ENCODE measurements at regions of chr11 and their contacts with region 1.

Region 1: GRCh38 chr11:11036848-11037732 is 179.2 kb upstream of the ZBED5 start:
- DNase-seq: no peak
- ATAC-seq: no peak
- H3K4me3 Mint-ChIP-seq: no peak overlapping the region
- H3K27ac Mint-ChIP-seq: no peak overlapping the region
- H3K4me1 Mint-ChIP-seq: no peaks in the 10 kb centered on the region
- H3K27me3 Mint-ChIP-seq: peaks cover 16% of the 10 kb centered on the region
- CTCF ChIP-seq: no peak

Region 2: DNA sequence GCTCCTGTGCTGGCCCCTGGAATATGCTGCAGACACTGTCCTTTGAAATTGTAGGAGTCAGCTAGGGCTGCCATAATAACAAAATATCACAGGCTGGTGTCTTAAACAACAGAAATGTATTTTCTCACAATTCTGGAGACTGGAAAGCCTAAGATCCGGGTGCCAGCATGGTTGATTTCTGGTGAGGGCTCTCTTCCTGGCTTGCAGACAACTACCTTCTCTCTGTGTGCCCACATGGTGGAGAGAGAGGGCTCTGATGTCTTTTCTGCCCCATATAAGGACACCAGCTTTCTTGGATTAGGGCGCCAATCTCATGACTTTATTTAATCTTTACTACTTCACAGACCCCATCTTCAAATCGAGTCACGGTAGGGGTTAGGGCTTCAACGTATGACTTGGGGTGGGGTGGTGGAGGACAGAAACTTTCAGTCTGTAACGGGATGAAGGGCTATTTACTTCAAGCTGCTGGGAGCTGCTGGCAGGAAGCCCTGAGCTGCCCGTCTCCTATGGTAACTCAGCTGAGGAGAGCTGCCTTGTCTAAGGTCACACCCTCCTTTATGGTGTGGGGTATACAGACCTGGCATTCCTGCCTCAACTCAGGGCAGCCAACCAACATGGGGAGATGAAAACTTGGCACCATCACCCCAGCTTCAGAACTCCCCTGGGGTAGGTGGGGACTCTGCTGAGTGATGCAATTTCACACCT is 36.4 kb before region 1 on chr11:
- CTCF ChIA-PET with region 1: no interaction called
- POLR2A ChIA-PET with region 1: no interaction called
- intact Hi-C with region 1: no loop called
- DNase-seq: no peak
- ATAC-seq: no peak
- H3K4me3 Mint-ChIP-seq: no peak overlapping the region
- H3K27ac Mint-ChIP-seq: no peak overlapping the region
- H3K4me1 Mint-ChIP-seq: peaks cover 16% of the 10 kb centered on the region
- H3K27me3 Mint-ChIP-seq: peaks cover 25% of the 10 kb centered on the region
- CTCF ChIP-seq: no peak

Region 3: GRCh38 chr11:11265994-11266606 is 229.0 kb after region 1 on chr11:
- CTCF ChIA-PET with region 1: interaction called, 3 read pairs
- POLR2A ChIA-PET with region 1: no interaction called
- intact Hi-C with region 1: loop called (anchors 1 kb)
- DNase-seq: no peak
- ATAC-seq: no peak
- H3K4me3 Mint-ChIP-seq: no peak overlapping the region
- H3K27ac Mint-ChIP-seq: no peak overlapping the region
- H3K4me1 Mint-ChIP-seq: peaks cover 26% of the 10 kb centered on the region
- H3K27me3 Mint-ChIP-seq: no peaks in the 10 kb centered on the region
- CTCF ChIP-seq: no peak

Region 4: DNA sequence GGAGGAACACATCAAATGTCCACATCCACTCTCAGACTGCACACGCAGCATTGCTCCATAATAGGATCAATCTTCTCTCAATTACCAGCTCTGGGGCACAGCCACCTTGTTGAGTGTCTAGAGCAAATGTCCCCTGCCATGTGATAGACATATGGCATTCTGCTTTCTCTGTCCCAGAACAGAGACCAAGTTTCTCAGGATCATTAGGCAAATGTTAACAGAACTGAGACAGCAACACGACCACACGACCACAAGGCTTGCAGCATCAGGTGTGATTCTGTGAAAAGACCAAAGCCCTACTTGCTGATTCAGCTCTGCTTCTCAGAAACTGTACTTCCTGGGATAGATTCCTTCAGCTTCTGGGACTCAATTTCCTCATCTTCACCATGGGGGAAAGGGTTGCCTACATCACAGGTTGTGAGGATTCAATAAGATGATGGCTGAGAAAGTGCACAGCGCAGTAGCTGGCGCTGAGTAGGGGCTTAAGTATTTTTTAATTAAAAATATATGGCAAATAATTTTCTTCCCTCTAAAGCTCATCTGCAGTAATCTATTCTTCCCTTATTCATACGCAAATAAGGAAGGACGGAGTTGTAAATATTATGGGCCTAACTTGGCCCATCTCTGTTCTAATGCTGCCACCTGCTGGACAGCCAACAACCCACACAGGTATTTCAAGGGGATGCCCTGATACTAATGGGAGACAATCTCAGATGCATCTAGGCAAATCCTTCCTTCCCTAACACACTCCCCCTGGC is 750.4 kb after region 1 on chr11:
- CTCF ChIA-PET with region 1: interaction called, 33 read pairs
- POLR2A ChIA-PET with region 1: no interaction called
- intact Hi-C with region 1: loop called (anchors 1 kb)
- DNase-seq: peak; percentile 33
- ATAC-seq: peak; percentile 85
- H3K4me3 Mint-ChIP-seq: no peak overlapping the region
- H3K27ac Mint-ChIP-seq: no peak overlapping the region
- H3K4me1 Mint-ChIP-seq: no peaks in the 10 kb centered on the region
- H3K27me3 Mint-ChIP-seq: peaks cover 9% of the 10 kb centered on the region
- CTCF ChIP-seq: peak; percentile 81

Region 5: DNA sequence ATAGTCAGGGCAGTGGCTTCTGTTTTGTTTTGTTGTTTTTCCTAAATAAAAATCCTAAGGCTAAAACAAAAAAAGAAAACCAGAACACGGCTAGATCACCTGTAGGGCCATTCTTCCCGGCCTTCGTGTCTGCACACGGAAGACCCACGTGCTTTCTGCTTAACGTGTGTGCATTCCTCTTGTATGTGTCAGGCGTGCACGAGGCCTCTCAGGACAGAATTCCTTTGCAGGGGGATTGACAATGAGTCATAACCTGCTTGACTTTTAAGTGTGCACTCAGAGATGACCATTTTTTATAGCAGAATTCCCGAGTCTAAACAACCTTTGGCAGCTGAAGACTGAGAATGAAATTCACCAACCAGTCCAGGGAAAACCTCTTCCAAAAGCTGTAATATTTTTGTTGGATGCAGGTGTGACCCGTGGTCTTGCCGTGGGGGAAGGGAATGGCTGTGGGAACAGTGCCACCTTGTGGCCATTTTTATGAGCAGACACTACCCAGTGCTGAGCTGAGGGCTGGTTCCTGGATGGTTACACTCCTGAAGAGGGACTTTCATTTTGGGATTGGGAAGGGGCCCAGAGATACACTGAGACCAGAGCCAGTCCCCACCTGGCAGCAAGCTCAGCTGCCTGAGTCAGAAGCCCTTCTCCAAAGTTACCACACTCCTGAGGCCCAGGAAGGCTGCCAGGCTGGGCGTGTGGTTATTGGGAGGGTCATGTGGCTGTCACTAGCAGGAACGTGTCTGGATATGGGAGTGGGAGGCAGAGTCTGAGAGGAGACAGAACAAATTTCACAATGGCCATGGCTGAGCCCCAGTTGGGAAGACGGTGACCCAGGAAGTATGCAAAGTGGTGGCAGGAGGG is 1007.1 kb after region 1 on chr11:
- CTCF ChIA-PET with region 1: no interaction called
- POLR2A ChIA-PET with region 1: no interaction called
- intact Hi-C with region 1: loop called (anchors 5 kb)
- DNase-seq: peak; percentile 34
- ATAC-seq: peak; percentile 66
- H3K4me3 Mint-ChIP-seq: no peak overlapping the region
- H3K27ac Mint-ChIP-seq: no peak overlapping the region
- H3K4me1 Mint-ChIP-seq: no peaks in the 10 kb centered on the region
- H3K27me3 Mint-ChIP-seq: peaks cover 6% of the 10 kb centered on the region
- CTCF ChIP-seq: peak; percentile 65

Region 6: DNA sequence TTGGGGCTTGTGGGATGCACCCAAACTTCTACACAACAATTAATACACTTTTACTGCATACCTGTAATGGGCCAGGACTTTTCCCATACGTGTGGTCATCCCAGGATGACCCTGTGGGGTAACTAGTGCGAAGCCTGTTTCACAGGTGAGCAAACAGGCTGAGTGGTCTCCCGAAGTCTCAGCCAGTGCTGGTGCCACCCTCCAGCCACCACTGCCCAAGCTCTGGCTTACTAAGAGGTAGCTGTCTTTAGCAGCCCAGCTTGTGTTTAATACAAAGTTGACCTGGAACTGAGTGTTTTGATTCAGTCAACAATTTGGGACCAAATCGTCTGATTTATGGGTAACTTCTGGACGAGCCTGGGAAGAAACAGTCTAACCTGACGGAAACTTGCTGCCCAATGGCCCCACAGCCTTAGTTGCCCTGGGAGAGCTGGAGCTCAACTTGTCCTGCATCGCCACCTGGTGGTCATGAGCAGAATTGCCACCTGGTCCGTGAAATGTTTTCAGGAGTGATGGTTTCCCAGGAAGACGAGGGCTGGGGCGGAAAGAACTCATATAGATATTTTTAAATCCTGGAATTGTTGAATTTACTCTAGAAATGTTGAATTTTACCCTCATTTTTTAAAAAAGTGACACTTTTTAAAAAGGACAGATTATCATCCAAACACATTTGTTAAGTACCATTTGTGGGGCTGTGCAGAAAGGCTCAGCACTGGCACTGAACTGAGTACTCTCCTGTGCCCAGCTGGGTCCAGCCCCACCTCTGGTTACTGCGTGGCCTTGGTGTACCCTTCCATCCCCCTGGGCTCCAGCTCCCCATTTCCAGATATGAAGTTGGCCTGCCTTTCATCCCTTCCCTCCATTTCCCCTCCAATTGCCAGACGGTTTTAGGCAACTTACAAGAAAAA is 1244.7 kb after region 1 on chr11:
- CTCF ChIA-PET with region 1: no interaction called
- POLR2A ChIA-PET with region 1: no interaction called
- intact Hi-C with region 1: loop called (anchors 10 kb)
- DNase-seq: peak; percentile 45
- ATAC-seq: peak; percentile 57
- H3K4me3 Mint-ChIP-seq: no peak overlapping the region
- H3K27ac Mint-ChIP-seq: no peak overlapping the region
- H3K4me1 Mint-ChIP-seq: no peaks in the 10 kb centered on the region
- H3K27me3 Mint-ChIP-seq: peaks cover 7% of the 10 kb centered on the region
- CTCF ChIP-seq: peak; percentile 89

Measured in activated B cell treated with CpG ODN at 0.5 μM for 24 hours (primary cell).